A549 (cell line): ENCODE measurements at regions of chr19 and their contacts with region 1.

Region 1: DNA sequence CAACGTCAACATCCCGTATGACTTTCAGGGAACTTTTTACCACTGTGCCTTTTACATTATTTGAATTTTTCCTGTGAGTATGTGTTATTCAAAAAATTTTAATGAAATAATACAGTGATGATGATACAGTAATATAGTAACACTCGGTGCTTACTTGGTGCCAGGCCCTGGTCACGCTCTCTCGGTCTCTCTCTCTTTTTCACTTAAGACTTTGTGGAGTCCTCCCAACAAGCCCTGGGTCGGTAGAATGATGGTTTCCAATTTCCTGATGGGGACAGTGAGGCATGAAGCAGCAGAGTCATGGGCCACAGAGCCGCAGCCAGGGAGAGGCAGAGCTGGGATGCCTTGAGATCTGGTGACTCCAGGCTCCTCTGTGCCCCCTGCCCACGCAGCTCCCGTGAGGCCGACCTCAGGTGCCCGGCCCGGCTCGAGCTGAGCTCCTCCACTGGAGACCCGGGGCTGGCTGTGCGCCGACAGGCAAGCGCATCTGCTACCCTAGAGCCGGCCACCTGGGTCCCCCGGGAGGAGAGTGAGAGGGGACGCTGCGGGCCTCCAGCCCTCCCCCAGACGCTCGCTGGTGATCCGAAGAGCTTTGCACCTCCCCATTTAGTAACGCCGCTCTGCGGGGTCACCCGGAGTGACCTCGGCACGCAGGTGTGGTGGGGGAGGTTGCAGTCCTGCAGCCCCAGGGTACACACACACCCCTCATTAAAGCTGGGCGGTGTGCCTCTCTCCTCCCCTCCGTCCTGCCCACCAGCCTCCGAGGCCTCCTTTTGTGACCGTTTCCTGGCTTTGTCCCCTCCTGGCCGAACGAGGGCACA is 4.4 kb upstream of the SBK3 start:
- DNase-seq: peak; percentile 88
- ATAC-seq: peak; percentile 74 to 75
- H3K4me3 ChIP-seq: peak overlapping the region; percentile 38
- H3K27ac ChIP-seq: peak overlapping the region; percentile 97 to 99
- H3K4me1 ChIP-seq: peaks cover 76% of the 10 kb centered on the region
- CTCF ChIP-seq: no peak; the same call in 2 of the 3 replicates
- EP300 ChIP-seq: no peak
- POLR2A ChIP-seq: peak; percentile 33; the same call in 1 of the 2 replicates
- RAD21 ChIP-seq: peak; percentile 41 to 42; a peak in 2 of 5 replicates

Region 2: GRCh38 chr19:55497763-55498162 is 51.9 kb before region 1 on chr19:
- CTCF ChIA-PET with region 1: no interaction called
- POLR2A ChIA-PET with region 1: no interaction called
- DNase-seq: no peak
- ATAC-seq: no peak
- H3K4me3 ChIP-seq: no peak overlapping the region
- H3K27ac ChIP-seq: no peak overlapping the region
- H3K4me1 ChIP-seq: peaks cover 4% of the 10 kb centered on the region; the same call in 1 of the 3 replicates
- CTCF ChIP-seq: no peak
- EP300 ChIP-seq: no peak
- POLR2A ChIP-seq: no peak
- RAD21 ChIP-seq: no peak

Region 3: DNA sequence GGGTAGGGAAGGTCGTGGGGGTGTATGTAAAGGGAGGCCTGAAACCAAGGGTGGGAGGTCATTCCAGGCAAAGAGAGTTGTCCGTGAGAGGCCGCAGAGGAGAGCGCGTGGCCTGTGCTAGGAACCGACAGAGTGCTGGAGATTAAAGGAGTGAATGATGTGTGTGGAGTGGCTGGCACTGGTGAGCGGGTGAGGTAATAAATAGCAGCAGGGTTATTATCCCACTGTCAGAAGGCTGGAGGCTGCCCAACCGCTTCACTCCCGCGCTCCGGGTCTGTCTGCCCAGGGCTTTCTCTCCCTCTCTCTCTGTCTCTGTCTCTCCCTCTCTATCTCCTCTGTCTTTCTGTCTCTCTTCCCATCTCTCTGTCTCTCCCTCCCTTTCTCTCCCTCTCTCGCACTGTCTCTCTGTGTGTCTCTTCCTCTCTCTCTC is 13.6 kb after region 1 on chr19:
- CTCF ChIA-PET with region 1: interaction called, 10 read pairs
- POLR2A ChIA-PET with region 1: no interaction called
- DNase-seq: no peak
- ATAC-seq: peak; percentile 65 to 66; a peak in 5 of 6 replicates
- H3K4me3 ChIP-seq: no peak overlapping the region
- H3K27ac ChIP-seq: no peak overlapping the region
- H3K4me1 ChIP-seq: peaks cover 6% of the 10 kb centered on the region; the same call in 1 of the 3 replicates
- CTCF ChIP-seq: no peak
- EP300 ChIP-seq: no peak
- POLR2A ChIP-seq: no peak
- RAD21 ChIP-seq: no peak

Region 4: DNA sequence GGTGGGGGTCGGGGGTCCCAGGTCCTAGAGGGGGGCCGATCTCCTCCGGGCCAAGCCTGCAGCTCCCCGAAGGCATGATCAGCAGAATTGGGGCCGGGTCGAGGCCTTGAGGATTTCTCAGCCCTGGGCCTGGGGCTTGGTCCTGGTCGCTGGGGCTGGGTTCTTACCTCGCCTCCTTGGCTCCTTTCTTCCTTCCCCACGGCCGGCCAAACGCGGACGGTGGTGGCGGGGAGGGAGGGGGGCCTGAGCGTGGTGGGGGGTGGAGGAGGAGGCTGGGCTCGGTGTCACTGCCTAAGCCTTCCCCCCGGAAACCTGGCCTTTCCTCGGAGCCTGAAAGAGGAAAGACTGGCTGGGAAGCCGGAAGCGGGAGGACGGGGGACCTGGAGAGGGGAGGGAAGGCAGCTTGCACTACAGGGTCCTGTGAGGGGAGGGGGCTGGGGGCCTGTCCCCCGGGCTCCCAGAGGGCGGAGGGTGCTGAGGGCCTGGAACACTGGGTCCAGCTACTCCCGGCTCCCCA is 31.0 kb after region 1 on chr19 and contains the start of gene ZNF579:
- CTCF ChIA-PET with region 1: interaction called, 8 read pairs
- POLR2A ChIA-PET with region 1: interaction called, 14 read pairs
- DNase-seq: peak; percentile 89 to 96
- ATAC-seq: peak; percentile 79 to 81
- H3K4me3 ChIP-seq: peak within 1 kb of the TSS; percentile 96
- H3K27ac ChIP-seq: peak within 1 kb of the TSS; percentile 99 to 100
- H3K4me1 ChIP-seq: peaks cover 26% of the 10 kb centered on the region
- CTCF ChIP-seq: no peak
- EP300 ChIP-seq: no peak; a peak in 1 of 5 replicates
- POLR2A ChIP-seq: peak; percentile 48
- RAD21 ChIP-seq: peak; percentile 30 to 47; a peak in 2 of 5 replicates
- polyA plus RNA-seq, gene ZNF579: 4.2 and 6.5 TPM in 2 replicates

Region 5: GRCh38 chr19:55586976-55587668 is 37.4 kb after region 1 on chr19:
- CTCF ChIA-PET with region 1: interaction called, 13 read pairs
- POLR2A ChIA-PET with region 1: interaction called, 14 read pairs
- DNase-seq: peak; percentile 97 to 98
- ATAC-seq: peak; percentile 86 to 88
- H3K4me3 ChIP-seq: peak overlapping the region; percentile 43
- H3K27ac ChIP-seq: peak overlapping the region; percentile 53 to 79
- H3K4me1 ChIP-seq: peaks cover 22% of the 10 kb centered on the region
- CTCF ChIP-seq: no peak
- EP300 ChIP-seq: no peak
- POLR2A ChIP-seq: no peak
- RAD21 ChIP-seq: no peak; a peak in 1 of 5 replicates

Region 6: DNA sequence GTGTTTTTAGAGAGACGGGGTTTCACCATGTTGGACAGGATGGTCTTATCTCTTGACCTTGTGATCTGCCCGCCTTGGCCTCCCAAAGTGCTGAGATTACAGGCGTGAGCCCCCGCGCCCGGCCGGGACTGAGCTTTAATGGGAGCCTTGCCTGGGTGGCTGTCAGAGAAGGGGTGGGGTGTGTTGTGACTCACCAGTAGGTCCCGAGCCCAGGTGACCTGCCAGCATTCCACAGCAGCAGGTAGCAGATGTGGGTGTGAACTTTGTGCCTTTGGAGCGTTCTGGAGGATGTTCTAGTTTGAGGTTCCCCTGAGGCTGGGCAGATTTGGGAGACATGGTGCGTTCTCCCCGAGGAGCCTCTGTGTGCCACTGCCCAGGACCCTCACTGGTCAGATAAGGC is 118.2 kb after region 1 on chr19:
- CTCF ChIA-PET with region 1: no interaction called
- POLR2A ChIA-PET with region 1: no interaction called
- DNase-seq: no peak
- ATAC-seq: no peak
- H3K4me3 ChIP-seq: no peak overlapping the region
- H3K27ac ChIP-seq: no peak overlapping the region
- H3K4me1 ChIP-seq: peaks cover 35% of the 10 kb centered on the region
- CTCF ChIP-seq: no peak
- EP300 ChIP-seq: no peak
- POLR2A ChIP-seq: no peak
- RAD21 ChIP-seq: no peak

Region 7: GRCh38 chr19:55702131-55702627 is 152.5 kb after region 1 on chr19:
- CTCF ChIA-PET with region 1: no interaction called
- POLR2A ChIA-PET with region 1: no interaction called
- DNase-seq: no peak
- ATAC-seq: no peak
- H3K4me3 ChIP-seq: no peak overlapping the region
- H3K27ac ChIP-seq: no peak overlapping the region
- H3K4me1 ChIP-seq: no peaks in the 10 kb centered on the region
- CTCF ChIP-seq: no peak
- EP300 ChIP-seq: no peak
- POLR2A ChIP-seq: no peak
- RAD21 ChIP-seq: no peak

Region 8: DNA sequence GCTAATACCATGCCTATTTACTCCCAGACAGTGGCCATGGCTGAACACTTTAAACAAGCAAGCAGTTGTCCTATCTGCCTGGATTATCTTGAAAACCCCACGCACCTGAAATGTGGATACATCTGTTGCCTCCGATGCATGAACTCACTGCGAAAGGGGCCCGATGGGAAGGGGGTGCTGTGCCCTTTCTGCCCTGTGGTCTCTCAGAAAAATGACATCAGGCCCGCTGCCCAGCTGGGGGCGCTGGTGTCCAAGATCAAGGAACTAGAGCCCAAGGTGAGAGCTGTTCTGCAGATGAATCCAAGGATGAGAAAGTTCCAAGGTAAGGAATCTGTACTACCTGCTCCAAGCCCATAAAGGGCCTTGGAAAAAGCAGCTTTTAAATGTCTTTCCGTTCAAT is 227.8 kb after region 1 on chr19:
- CTCF ChIA-PET with region 1: no interaction called
- POLR2A ChIA-PET with region 1: no interaction called
- DNase-seq: no peak
- ATAC-seq: peak in 1 of 2 experiments; percentile 55; a peak in 3 of 6 replicates
- H3K4me3 ChIP-seq: no peak overlapping the region
- H3K27ac ChIP-seq: no peak overlapping the region
- H3K4me1 ChIP-seq: no peaks in the 10 kb centered on the region
- CTCF ChIP-seq: no peak
- EP300 ChIP-seq: no peak
- POLR2A ChIP-seq: no peak
- RAD21 ChIP-seq: peak in 1 of 2 experiments; percentile 47; a peak in 2 of 5 replicates